HCT116 (cell line): ENCODE measurements at regions of chr3 and their contacts with region 1.

Region 1: GRCh38 chr3:148234536-148234935 is 463.2 kb upstream of the AGTR1 start:
- DNase-seq: no peak
- ATAC-seq: no peak
- H3K4me3 ChIP-seq: no peak overlapping the region
- H3K27ac ChIP-seq: no peak overlapping the region
- H3K4me1 ChIP-seq: no peaks in the 10 kb centered on the region
- H3K27me3 ChIP-seq: no peaks in the 10 kb centered on the region
- CTCF ChIP-seq: no peak
- POLR2A ChIP-seq: no peak
- RAD21 ChIP-seq: no peak

Region 2: GRCh38 chr3:148218222-148218621 is 16.3 kb before region 1 on chr3:
- CTCF ChIA-PET with region 1: no interaction called
- POLR2A ChIA-PET with region 1: no interaction called
- RAD21 ChIA-PET with region 1: no interaction called
- intact Hi-C with region 1: loop called (anchors 2 kb)
- DNase-seq: no peak
- ATAC-seq: no peak
- H3K4me3 ChIP-seq: no peak overlapping the region
- H3K27ac ChIP-seq: no peak overlapping the region
- H3K4me1 ChIP-seq: 0 out of 4 replicates have a peak, but pooled peaks cover 0 to 3% of the 10 kb centered on the region in 2 experiments
- H3K27me3 ChIP-seq: no peaks in the 10 kb centered on the region
- CTCF ChIP-seq: no peak
- POLR2A ChIP-seq: no peak
- RAD21 ChIP-seq: no peak

Region 3: DNA sequence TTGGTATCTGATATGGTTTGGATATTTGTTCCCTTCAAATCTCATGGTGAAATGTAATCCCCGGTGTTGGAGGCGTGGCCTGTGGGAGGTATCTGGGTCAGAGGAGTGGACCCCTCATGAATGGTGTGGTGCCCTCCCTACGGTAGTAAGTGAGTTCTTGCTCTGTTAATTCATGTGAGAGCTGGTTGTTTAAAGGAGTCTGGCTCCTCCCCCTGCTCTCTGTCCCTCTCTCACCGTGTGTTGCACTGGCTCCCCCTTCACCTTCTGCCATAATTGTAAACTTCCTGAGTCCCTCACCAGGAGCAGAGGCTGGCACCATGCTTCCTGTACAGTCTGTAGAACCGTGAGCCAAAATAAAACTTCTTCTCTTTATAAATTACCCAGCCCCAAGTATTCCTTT is 216.3 kb after region 1 on chr3:
- CTCF ChIA-PET with region 1: no interaction called
- POLR2A ChIA-PET with region 1: no interaction called
- RAD21 ChIA-PET with region 1: no interaction called
- intact Hi-C with region 1: no loop called
- DNase-seq: no peak
- ATAC-seq: peak; percentile 74
- H3K4me3 ChIP-seq: no peak overlapping the region
- H3K27ac ChIP-seq: no peak overlapping the region
- H3K4me1 ChIP-seq: peaks cover 0 to 4% of the 10 kb centered on the region in 2 experiments; a peak in 1 of 4 replicates
- H3K27me3 ChIP-seq: no peaks in the 10 kb centered on the region
- CTCF ChIP-seq: no peak
- POLR2A ChIP-seq: no peak
- RAD21 ChIP-seq: no peak